ENCODE measurements at regions of chr10 and their contacts with region 1.

Region 1: GRCh38 chr10:101007099-101007711 is 7.6 kb downstream of the LZTS2 start:
- DNase-seq: no peak
- H3K27ac ChIP-seq: peak overlapping the region; percentile 63
- CTCF ChIP-seq: no peak

Region 2: GRCh38 chr10:99711129-99711719 is 1296.0 kb before region 1 on chr10:
- CTCF ChIA-PET with region 1: no interaction called
- POLR2A ChIA-PET with region 1: no interaction called
- DNase-seq: peak; percentile 50
- H3K27ac ChIP-seq: no peak overlapping the region
- CTCF ChIP-seq: peak; percentile 69

Region 3: DNA sequence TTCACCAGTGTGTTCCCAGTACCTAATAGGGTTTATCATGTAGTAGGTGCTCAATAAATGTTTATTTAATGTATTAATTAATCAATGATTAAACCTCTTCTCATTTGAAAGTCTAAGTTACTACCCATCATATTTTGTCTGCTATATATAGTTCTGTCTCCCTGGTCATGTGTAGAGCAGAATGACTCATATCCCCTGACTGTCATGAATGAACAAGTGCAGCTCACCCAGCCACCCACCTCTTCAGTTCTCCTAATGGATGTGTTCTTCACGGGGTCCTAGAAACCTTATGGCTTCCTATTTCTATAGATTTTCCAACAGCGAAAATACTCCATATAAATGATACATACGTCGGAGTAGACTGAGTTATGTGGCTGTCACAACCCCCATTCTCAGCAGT is 407.0 kb before region 1 on chr10:
- CTCF ChIA-PET with region 1: no interaction called
- POLR2A ChIA-PET with region 1: no interaction called
- DNase-seq: peak; percentile 46
- H3K27ac ChIP-seq: no peak overlapping the region
- CTCF ChIP-seq: no peak

Region 4: GRCh38 chr10:100993986-100994708 is 13.1 kb before region 1 on chr10:
- CTCF ChIA-PET with region 1: interaction called, 27 read pairs
- POLR2A ChIA-PET with region 1: interaction called, 8 read pairs
- DNase-seq: no peak
- H3K27ac ChIP-seq: peak overlapping the region; percentile 99
- CTCF ChIP-seq: peak; percentile 75

Region 5: GRCh38 chr10:101120884-101121653 is 113.9 kb after region 1 on chr10:
- CTCF ChIA-PET with region 1: no interaction called
- POLR2A ChIA-PET with region 1: no interaction called
- DNase-seq: no peak
- H3K27ac ChIP-seq: no peak overlapping the region
- CTCF ChIP-seq: no peak